ENCODE measurements at regions of chrX and their contacts with region 1.

Region 1: GRCh38 chrX:148459343-148459742 is 41.1 kb upstream of the AFF2 start:
- DNase-seq: peak; percentile 12
- ATAC-seq: peak; percentile 91
- H3K4me3 Mint-ChIP-seq: peak overlapping the region; percentile 53
- H3K27ac Mint-ChIP-seq: peak overlapping the region; percentile 81
- H3K4me1 Mint-ChIP-seq: peaks cover 38% of the 10 kb centered on the region
- H3K27me3 Mint-ChIP-seq: no peaks in the 10 kb centered on the region
- CTCF ChIP-seq: no peak

Region 2: DNA sequence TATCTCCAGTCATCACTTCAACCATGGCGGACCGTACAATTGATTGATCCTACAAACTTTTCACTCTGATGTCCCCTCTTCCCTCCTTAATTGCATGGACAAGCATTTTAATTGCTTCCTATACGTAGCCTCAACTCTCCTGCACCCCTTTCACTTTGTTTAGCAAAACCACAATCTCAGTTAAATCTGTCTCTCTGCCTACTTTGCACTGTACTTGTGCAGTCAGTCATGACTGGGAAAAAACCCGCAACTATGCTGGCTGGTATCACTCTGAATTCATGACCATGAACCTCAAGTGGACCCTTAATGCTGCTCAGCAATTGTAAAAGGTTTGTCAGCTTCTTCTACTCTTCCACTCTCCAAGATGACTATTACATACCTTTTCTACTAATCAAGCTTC is 10.7 kb before region 1 on chrX:
- CTCF ChIA-PET with region 1: no interaction called
- POLR2A ChIA-PET with region 1: no interaction called
- intact Hi-C with region 1: loop called (anchors 1 kb)
- DNase-seq: no peak
- ATAC-seq: peak; percentile 74
- H3K4me3 Mint-ChIP-seq: peak overlapping the region; percentile 24
- H3K27ac Mint-ChIP-seq: peak overlapping the region; percentile 61
- H3K4me1 Mint-ChIP-seq: peaks cover 12% of the 10 kb centered on the region
- H3K27me3 Mint-ChIP-seq: peaks cover 2% of the 10 kb centered on the region
- CTCF ChIP-seq: no peak

Region 3: GRCh38 chrX:148500423-148501385 is 41.4 kb after region 1 on chrX and contains the start of gene AFF2:
- CTCF ChIA-PET with region 1: no interaction called
- POLR2A ChIA-PET with region 1: no interaction called
- intact Hi-C with region 1: loop called (anchors 2 kb)
- DNase-seq: peak; percentile 33
- ATAC-seq: peak; percentile 74
- H3K4me3 Mint-ChIP-seq: peak within 1 kb of the TSS; percentile 82
- H3K27ac Mint-ChIP-seq: no peak within 1 kb of the TSS
- H3K4me1 Mint-ChIP-seq: peaks cover 5% of the 10 kb centered on the region
- H3K27me3 Mint-ChIP-seq: peaks cover 2% of the 10 kb centered on the region
- CTCF ChIP-seq: no peak
- total RNA-seq, gene AFF2: 2.8 and 3.4 TPM in 2 replicates

Region 4: GRCh38 chrX:148580016-148580415 is 120.7 kb after region 1 on chrX:
- CTCF ChIA-PET with region 1: no interaction called
- POLR2A ChIA-PET with region 1: no interaction called
- intact Hi-C with region 1: no loop called
- DNase-seq: no peak
- ATAC-seq: no peak
- H3K4me3 Mint-ChIP-seq: no peak overlapping the region
- H3K27ac Mint-ChIP-seq: no peak overlapping the region
- H3K4me1 Mint-ChIP-seq: no peaks in the 10 kb centered on the region
- H3K27me3 Mint-ChIP-seq: no peaks in the 10 kb centered on the region
- CTCF ChIP-seq: no peak

Measured in activated B cell treated with CpG ODN at 0.5 μM for 24 hours (primary cell).